ENCODE measurements at regions of chr7 and their contacts with region 1.

Region 1: GRCh38 chr7:5494683-5495561 is 71.3 kb upstream of the TNRC18 start:
- DNase-seq: peak; percentile 71 to 90 (median 77)
- ATAC-seq: peak; percentile 87
- H3K4me3 ChIP-seq: peak overlapping the region; percentile 38
- H3K4me3 Mint-ChIP-seq: peak overlapping the region; percentile 34
- H3K27ac ChIP-seq: no peak overlapping the region
- H3K27ac Mint-ChIP-seq: no peak overlapping the region
- H3K4me1 ChIP-seq: peaks cover 32% of the 10 kb centered on the region
- H3K4me1 Mint-ChIP-seq: peaks cover 26% of the 10 kb centered on the region
- H3K27me3 ChIP-seq: no peaks in the 10 kb centered on the region
- H3K27me3 Mint-ChIP-seq: no peaks in the 10 kb centered on the region
- CTCF ChIP-seq: peak; percentile 98

Region 2: DNA sequence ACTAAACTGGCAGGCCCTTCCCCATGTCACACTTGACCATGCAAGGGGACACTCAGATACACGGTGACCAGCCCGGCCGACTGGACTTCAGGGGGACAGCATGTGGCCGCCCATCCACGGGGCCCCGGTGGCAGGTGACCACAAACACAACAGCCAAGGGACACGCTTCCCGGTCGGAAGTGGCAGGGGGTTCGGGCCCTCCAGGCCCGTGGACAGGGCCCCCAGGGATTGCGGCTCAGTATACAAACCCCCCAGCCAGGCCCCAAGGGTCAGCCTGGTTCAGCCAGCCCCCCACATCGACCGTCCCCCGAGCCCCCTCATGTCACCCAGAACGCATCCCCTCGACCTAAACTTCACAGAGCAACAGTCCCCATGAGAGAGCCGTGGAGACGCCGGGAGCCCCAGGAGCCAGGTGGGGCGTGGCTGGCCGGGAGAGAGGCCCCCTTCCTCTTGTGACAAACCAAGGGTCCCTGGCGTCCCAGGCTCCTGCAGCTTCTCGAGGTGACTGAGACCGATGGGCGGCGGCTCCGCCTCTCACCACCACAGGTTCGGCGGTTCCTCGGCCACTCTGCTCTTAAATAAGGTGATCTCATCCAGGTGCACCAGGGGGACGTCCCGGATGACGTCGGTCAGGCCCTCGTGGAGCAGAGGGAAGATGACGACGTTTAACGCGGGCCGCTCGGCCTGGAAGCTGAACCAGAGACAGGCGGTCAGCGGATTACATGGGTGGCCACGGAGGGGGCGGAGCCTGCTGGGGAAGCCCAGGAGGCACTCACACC is 13.5 kb before region 1 on chr7:
- CTCF ChIA-PET with region 1: no interaction called
- POLR2A ChIA-PET with region 1: no interaction called
- intact Hi-C with region 1: no loop called
- DNase-seq: peak in 1 of 14 experiments; percentile 16
- ATAC-seq: no peak
- H3K4me3 ChIP-seq: no peak overlapping the region
- H3K4me3 Mint-ChIP-seq: no peak overlapping the region
- H3K27ac ChIP-seq: no peak overlapping the region
- H3K27ac Mint-ChIP-seq: no peak overlapping the region
- H3K4me1 ChIP-seq: peaks cover 3% of the 10 kb centered on the region
- H3K4me1 Mint-ChIP-seq: peaks cover 2% of the 10 kb centered on the region
- H3K27me3 ChIP-seq: no peaks in the 10 kb centered on the region
- H3K27me3 Mint-ChIP-seq: no peaks in the 10 kb centered on the region
- CTCF ChIP-seq: no peak

Region 3: GRCh38 chr7:5526100-5526905 is 31.4 kb after region 1 on chr7:
- CTCF ChIA-PET with region 1: interaction called, 6 read pairs
- POLR2A ChIA-PET with region 1: interaction called, 19 read pairs
- intact Hi-C with region 1: no loop called
- DNase-seq: peak in 10 of 14 experiments; percentile 10 to 56 (median 26)
- ATAC-seq: no peak
- H3K4me3 ChIP-seq: peak overlapping the region; percentile 72
- H3K4me3 Mint-ChIP-seq: peak overlapping the region; percentile 97
- H3K27ac ChIP-seq: peak overlapping the region; percentile 27 to 48
- H3K27ac Mint-ChIP-seq: peak overlapping the region; percentile 95
- H3K4me1 ChIP-seq: peaks cover 37% of the 10 kb centered on the region
- H3K4me1 Mint-ChIP-seq: peaks cover 41% of the 10 kb centered on the region
- H3K27me3 ChIP-seq: no peaks in the 10 kb centered on the region
- H3K27me3 Mint-ChIP-seq: peaks cover 4% of the 10 kb centered on the region
- CTCF ChIP-seq: no peak

Region 4: DNA sequence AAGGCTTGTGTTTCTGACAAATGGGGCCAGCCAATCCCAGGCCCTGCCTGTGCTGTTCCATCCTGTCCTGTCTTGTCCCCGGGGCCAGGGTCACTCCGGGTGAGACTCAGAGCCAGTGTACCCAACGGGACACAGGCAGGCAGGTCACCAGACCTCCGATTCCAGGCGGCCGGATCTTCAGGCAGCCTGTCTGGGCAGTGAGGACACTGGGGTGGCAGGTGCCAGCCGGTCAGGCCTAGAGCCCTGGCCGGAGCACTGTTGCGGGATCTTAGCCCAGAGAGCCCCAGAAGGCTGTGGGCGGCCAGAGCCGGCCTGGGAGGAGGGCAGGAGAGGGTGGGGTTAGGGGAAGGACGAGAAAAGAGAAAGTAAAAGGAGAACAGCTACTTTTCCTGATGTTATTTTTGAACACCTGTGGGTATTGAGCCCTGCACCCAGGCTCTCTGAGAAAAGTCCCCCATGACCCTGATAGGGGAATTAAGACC is 63.0 kb after region 1 on chr7:
- CTCF ChIA-PET with region 1: interaction called, 40 read pairs
- POLR2A ChIA-PET with region 1: interaction called, 6 read pairs
- intact Hi-C with region 1: loop called (anchors 1 kb)
- DNase-seq: peak in 3 of 14 experiments; percentile 47 to 62 (median 47)
- ATAC-seq: no peak
- H3K4me3 ChIP-seq: peak overlapping the region; percentile 40
- H3K4me3 Mint-ChIP-seq: peak overlapping the region; percentile 88
- H3K27ac ChIP-seq: peak overlapping the region; percentile 57 to 82
- H3K27ac Mint-ChIP-seq: peak overlapping the region; percentile 79
- H3K4me1 ChIP-seq: peaks cover 66% of the 10 kb centered on the region
- H3K4me1 Mint-ChIP-seq: peaks cover 44% of the 10 kb centered on the region
- H3K27me3 ChIP-seq: peaks cover 0 to 2% of the 10 kb centered on the region in 2 experiments
- H3K27me3 Mint-ChIP-seq: peaks cover 6% of the 10 kb centered on the region
- CTCF ChIP-seq: no peak

Region 5: GRCh38 chr7:5665094-5666025 is 170.4 kb after region 1 on chr7:
- CTCF ChIA-PET with region 1: interaction called, 38 read pairs
- POLR2A ChIA-PET with region 1: interaction called, 9 read pairs
- intact Hi-C with region 1: loop called (anchors 1 kb)
- DNase-seq: peak; percentile 38 to 86 (median 50)
- ATAC-seq: peak; percentile 80
- H3K4me3 ChIP-seq: no peak overlapping the region
- H3K4me3 Mint-ChIP-seq: no peak overlapping the region
- H3K27ac ChIP-seq: no peak overlapping the region
- H3K27ac Mint-ChIP-seq: no peak overlapping the region
- H3K4me1 ChIP-seq: peaks cover 15% of the 10 kb centered on the region
- H3K4me1 Mint-ChIP-seq: peaks cover 21% of the 10 kb centered on the region
- H3K27me3 ChIP-seq: no peaks in the 10 kb centered on the region
- H3K27me3 Mint-ChIP-seq: no peaks in the 10 kb centered on the region
- CTCF ChIP-seq: peak; percentile 82

Region 6: GRCh38 chr7:5689118-5689517 is 194.2 kb after region 1 on chr7:
- CTCF ChIA-PET with region 1: interaction called, 10 read pairs
- POLR2A ChIA-PET with region 1: interaction called, 6 read pairs
- intact Hi-C with region 1: no loop called
- DNase-seq: peak; percentile 33 to 84 (median 58)
- ATAC-seq: peak; percentile 61
- H3K4me3 ChIP-seq: peak overlapping the region; percentile 21
- H3K4me3 Mint-ChIP-seq: peak overlapping the region; percentile 75
- H3K27ac ChIP-seq: peak overlapping the region; percentile 69 to 83
- H3K27ac Mint-ChIP-seq: peak overlapping the region; percentile 90
- H3K4me1 ChIP-seq: peaks cover 85% of the 10 kb centered on the region
- H3K4me1 Mint-ChIP-seq: peaks cover 89% of the 10 kb centered on the region
- H3K27me3 ChIP-seq: no peaks in the 10 kb centered on the region
- H3K27me3 Mint-ChIP-seq: no peaks in the 10 kb centered on the region
- CTCF ChIP-seq: no peak

Region 7: GRCh38 chr7:5780801-5781496 is 286.0 kb after region 1 on chr7:
- CTCF ChIA-PET with region 1: interaction called, 7 read pairs
- POLR2A ChIA-PET with region 1: no interaction called
- intact Hi-C with region 1: loop called in 1 of 2 experiments (anchors 5 kb)
- DNase-seq: peak in 11 of 14 experiments; percentile 2 to 53 (median 24)
- ATAC-seq: peak; percentile 5
- H3K4me3 ChIP-seq: peak overlapping the region; percentile 52
- H3K4me3 Mint-ChIP-seq: peak overlapping the region; percentile 93
- H3K27ac ChIP-seq: peak overlapping the region in 1 of 2 donors; percentile 73
- H3K27ac Mint-ChIP-seq: peak overlapping the region; percentile 88
- H3K4me1 ChIP-seq: peaks cover 40% of the 10 kb centered on the region
- H3K4me1 Mint-ChIP-seq: peaks cover 41% of the 10 kb centered on the region
- H3K27me3 ChIP-seq: no peaks in the 10 kb centered on the region
- H3K27me3 Mint-ChIP-seq: no peaks in the 10 kb centered on the region
- CTCF ChIP-seq: no peak

Region 8: DNA sequence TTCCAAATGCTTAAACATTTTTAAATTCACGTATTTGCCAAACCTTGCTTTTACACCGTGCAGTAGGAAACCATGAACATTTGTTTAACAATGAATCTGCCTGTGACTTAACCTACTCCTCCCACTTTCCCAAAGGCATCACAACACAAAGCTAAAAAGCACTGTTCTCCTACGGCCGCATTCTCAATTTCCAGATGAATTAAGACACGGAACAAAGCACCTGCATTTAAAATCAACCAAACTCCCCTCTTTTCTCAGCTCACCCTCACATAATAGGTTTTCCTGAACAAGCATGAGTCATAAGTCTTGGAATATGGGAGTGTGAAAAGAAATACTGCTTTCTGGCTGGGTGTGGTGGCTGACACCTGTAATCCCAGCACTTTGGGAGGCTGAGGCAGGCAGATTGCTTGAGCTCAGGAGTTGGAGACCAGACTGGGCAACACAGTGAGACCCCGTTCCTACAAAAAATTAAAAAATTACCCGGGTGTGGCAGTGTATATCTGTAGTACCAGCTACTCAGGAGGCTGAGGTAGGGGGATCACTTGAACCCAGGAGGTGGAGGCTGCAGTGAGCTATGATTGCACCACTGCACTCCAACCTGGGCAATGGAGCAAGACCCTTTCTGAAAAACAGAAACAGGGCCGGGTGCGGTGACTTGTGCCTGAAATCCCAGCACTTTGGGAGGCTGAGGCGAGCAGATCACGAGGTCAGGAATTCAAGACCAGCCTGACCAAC is 829.2 kb after region 1 on chr7:
- CTCF ChIA-PET with region 1: interaction called, 3 read pairs
- POLR2A ChIA-PET with region 1: no interaction called
- intact Hi-C with region 1: loop called in 1 of 2 experiments (anchors 10 kb)
- DNase-seq: no peak
- ATAC-seq: no peak
- H3K4me3 ChIP-seq: no peak overlapping the region
- H3K4me3 Mint-ChIP-seq: no peak overlapping the region
- H3K27ac ChIP-seq: no peak overlapping the region
- H3K27ac Mint-ChIP-seq: no peak overlapping the region
- H3K4me1 ChIP-seq: peaks cover 3% of the 10 kb centered on the region
- H3K4me1 Mint-ChIP-seq: no peaks in the 10 kb centered on the region
- H3K27me3 ChIP-seq: no peaks in the 10 kb centered on the region
- H3K27me3 Mint-ChIP-seq: no peaks in the 10 kb centered on the region
- CTCF ChIP-seq: no peak

Measured in CD4-positive, alpha-beta T cell (primary cell).